Activated CD8-positive, alpha-beta T cell treated with anti-CD3 and anti-CD28 coated beads for 36 hours (primary cell): ENCODE measurements at regions of chr5 and their contacts with region 1.

Region 1: DNA sequence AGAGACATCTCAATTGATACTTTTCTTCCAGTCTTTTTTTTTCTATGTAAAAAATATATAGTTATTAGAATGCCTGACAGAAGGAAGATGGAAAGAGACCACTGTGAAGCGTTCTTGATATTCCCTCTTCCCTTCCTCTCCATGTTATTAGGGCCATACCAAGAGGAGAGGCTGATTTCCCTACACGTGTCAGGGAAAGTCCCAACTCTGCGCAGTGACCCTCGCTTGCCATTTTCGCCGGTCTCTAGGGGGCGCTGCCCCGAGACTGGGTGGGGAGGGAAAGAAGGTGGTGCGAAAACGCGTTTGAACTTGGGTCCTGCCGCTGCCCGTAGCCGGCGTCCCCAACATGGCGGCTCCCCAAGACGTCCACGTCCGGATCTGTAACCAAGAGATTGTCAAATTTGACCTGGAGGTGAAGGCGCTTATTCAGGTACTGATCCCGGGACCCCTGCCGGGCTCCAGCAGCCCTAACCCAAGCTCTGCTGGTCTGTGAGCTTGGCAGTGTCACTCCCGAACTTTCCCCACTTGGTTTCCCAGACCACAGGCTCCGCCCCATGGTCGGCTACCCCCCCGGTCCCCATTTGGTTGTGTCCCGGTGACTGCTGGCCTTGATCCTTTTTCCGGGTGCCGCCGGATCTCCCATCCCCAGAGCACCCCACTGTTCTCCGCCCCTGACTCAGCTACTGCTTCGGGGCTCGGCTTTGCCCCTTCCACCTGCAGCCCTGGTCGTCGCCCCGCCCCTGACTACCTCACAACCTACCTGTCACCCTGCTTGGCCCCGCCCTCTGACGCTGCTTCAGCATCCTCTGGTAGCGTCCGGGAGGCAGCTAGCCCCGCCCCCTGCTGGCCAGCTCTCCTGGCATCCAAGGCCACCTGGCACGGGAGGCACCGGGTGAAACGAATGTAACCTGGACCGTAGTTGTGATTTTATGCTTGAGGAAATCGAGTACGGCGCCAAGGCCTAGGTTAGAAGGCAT is at the start of gene BNIP1:
- DNase-seq: peak; percentile 98
- ATAC-seq: peak; percentile 94
- H3K4me3 Mint-ChIP-seq: peak within 1 kb of the TSS; percentile 99
- H3K27ac Mint-ChIP-seq: peak within 1 kb of the TSS; percentile 100
- H3K4me1 Mint-ChIP-seq: peaks cover 16% of the 10 kb centered on the region
- H3K27me3 Mint-ChIP-seq: no peaks in the 10 kb centered on the region
- CTCF ChIP-seq: peak; percentile 90
- total RNA-seq, gene BNIP1: 23.5 to 25.2 TPM

Region 2: DNA sequence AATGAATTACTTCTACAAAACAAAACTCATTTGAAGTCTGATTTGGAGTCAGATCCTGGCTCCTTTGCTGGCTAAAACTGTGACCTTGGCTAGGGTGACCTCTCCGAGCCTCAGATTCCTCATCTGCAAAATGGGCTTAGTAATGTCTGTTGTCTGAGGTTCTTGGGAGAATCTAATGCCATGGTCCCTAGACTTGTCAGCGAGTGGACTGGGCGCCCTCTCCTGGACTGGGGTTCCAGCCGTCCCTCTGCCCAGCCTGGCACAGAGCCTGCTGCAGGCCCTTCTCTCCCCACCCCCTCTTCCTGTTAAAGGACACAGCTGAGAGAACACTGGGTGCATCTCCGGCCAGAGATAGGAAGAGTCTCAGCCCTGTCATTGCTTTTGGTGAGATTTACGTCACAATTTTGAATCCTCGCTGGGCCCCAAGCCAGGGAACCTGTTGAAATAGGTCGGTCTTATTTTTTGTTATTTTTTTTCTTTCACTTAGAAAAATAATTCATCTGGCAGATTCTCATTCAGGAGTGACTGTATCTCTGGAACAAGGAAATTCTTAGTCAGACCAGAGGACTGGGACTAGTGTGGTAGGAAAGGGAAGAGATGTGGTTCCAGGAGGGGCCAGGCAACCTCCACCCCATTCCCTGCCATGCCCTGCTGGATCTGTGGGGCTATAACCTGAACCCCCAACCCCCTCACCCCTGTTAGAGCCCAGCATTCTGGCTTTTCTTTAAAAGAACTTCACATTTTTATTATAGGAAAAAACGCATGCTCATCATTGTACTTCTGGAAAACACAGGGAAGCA is 233.5 kb before region 1 on chr5:
- CTCF ChIA-PET with region 1: no interaction called
- POLR2A ChIA-PET with region 1: no interaction called
- intact Hi-C with region 1: no loop called
- DNase-seq: peak; percentile 43
- ATAC-seq: no peak
- H3K4me3 Mint-ChIP-seq: no peak overlapping the region
- H3K27ac Mint-ChIP-seq: no peak overlapping the region
- H3K4me1 Mint-ChIP-seq: peaks cover 8% of the 10 kb centered on the region
- H3K27me3 Mint-ChIP-seq: no peaks in the 10 kb centered on the region
- CTCF ChIP-seq: no peak

Region 3: DNA sequence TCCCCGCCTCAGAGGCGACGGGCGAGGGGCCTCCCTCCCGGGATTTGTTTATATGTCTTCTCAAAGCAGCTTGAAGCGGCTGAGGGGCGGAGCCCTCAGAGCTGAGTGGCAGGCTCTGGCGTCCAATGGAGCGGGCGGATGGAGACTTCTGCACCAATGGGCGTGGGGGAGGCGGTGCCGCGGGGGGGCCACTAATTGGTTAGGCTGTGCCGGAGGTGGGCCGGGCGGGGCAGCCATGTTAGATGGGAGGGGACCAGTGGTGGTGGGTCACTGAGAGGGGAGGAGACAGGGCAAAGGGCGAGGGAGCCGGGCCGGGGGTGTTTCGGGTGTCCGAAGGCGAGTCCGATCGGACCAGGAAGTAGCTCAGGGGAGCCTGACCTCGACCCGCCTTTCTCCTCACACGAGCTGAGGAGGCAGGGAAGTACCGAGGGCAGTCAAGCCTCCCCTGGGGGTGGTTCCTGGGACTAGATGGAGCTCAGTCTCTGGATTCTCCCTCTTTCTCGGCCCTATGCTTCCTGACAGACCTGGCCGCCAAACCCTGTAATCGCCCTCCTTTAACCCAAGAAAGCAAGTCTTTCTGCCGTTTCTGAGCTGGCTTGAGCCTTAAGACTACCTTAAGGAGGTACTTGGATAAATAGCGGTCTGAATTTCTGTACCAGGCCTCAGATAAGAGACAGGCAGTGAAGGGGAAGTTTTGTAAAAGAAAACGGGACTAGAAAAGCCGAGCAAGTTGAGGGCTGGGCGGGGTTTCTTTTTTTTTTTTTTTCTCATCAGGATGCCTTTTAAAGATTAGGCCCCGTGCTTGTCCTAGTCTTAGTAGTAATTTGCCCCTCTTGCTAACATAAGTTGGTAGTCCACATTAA is 87.2 kb before region 1 on chr5:
- CTCF ChIA-PET with region 1: interaction called, 9 read pairs
- POLR2A ChIA-PET with region 1: interaction called, 3 read pairs
- intact Hi-C with region 1: loop called (anchors 5 kb)
- DNase-seq: peak; percentile 100
- ATAC-seq: peak; percentile 90
- H3K4me3 Mint-ChIP-seq: peak overlapping the region; percentile 91
- H3K27ac Mint-ChIP-seq: peak overlapping the region; percentile 97
- H3K4me1 Mint-ChIP-seq: peaks cover 47% of the 10 kb centered on the region
- H3K27me3 Mint-ChIP-seq: no peaks in the 10 kb centered on the region
- CTCF ChIP-seq: no peak